A673 (cell line): ENCODE measurements at regions of chr1 and their contacts with region 1.

Region 1: DNA sequence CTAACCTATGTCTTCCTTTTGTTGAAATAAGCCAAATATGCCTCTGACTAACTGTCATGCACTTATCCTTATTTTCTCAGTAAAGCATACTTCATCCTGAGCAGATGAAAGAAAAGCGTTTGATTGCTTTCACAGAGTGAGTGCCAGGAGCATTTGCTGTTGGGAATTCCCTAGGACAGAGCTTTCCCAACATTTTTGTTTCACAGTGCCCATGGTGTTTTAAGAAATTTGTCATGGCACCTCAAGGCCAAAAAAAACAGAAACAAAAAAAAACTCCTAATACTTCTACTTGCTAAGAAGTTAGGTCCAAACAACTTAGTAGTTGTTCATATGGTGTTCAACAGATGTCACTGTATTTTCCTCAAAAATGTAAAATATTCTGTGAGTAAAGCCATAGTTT is 120.8 kb upstream of the BMP8A start:
- DNase-seq: no peak
- H3K4me3 ChIP-seq: no peak overlapping the region
- H3K27ac ChIP-seq: no peak overlapping the region
- H3K4me1 ChIP-seq: no peaks in the 10 kb centered on the region
- H3K27me3 ChIP-seq: no peaks in the 10 kb centered on the region
- CTCF ChIP-seq: no peak

Region 2: GRCh38 chr1:39573736-39574624 is 203.4 kb after region 1 on chr1:
- CTCF ChIA-PET with region 1: interaction called, 14 read pairs
- POLR2A ChIA-PET with region 1: no interaction called
- intact Hi-C with region 1: no loop called
- DNase-seq: no peak
- H3K4me3 ChIP-seq: peak overlapping the region; percentile 67
- H3K27ac ChIP-seq: no peak overlapping the region
- H3K4me1 ChIP-seq: peaks cover 9% of the 10 kb centered on the region
- H3K27me3 ChIP-seq: no peaks in the 10 kb centered on the region
- CTCF ChIP-seq: no peak